ENCODE measurements at regions of chr1 and their contacts with region 1.

Region 1: GRCh38 chr1:225652729-225653462 is at the start of gene ENAH:
- DNase-seq: peak; percentile 67 to 93 (median 82)
- ATAC-seq: peak; percentile 88
- H3K4me3 ChIP-seq: peak within 1 kb of the TSS; percentile 26
- H3K27ac ChIP-seq: no peak within 1 kb of the TSS
- H3K4me1 ChIP-seq: peaks cover 0 to 16% of the 10 kb centered on the region in 2 experiments; a peak in 2 of 5 replicates
- H3K27me3 ChIP-seq: peaks cover 33 to 35% of the 10 kb centered on the region in 2 experiments
- CTCF ChIP-seq: no peak
- EP300 ChIP-seq: no peak
- POLR2A ChIP-seq: no peak
- RAD21 ChIP-seq: no peak
- polyA plus RNA-seq, gene ENAH: 0.03 to 0.13 TPM

Region 2: DNA sequence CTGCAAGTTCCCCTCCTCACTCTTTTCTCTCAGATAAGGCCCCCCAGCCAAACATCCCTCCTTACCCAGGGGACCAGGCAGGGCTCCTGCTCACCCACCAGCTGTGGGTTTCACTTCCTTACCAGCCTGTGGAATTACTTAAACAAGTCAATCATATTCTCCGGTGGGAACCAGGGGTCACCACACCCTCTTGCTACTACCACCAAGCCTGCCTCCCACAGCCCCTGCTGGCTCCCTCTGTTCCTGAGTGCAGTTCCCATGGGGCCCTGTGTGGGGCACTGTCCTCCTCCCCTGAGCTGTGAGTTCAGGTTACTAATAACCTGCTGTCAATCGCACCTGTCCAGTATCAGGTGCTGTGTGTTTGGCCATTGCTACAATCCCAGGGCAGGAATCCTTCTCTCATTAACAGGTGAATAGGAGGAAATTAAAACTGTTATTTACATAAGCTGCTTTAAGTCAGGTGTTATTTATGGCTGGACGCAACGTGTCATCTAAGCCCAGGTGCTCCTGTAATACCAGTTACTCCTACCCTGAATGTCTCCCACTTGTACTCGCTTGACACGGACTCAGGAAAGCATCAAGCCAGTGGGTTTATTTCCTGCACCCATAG is 172.0 kb before region 1 on chr1:
- CTCF ChIA-PET with region 1: no interaction called
- POLR2A ChIA-PET with region 1: no interaction called
- in situ Hi-C with region 1: no loop called
- intact Hi-C with region 1: loop called (anchors 2 kb)
- DNase-seq: peak; percentile 74 to 81 (median 80)
- ATAC-seq: peak; percentile 93
- H3K4me3 ChIP-seq: no peak overlapping the region
- H3K27ac ChIP-seq: no peak overlapping the region
- H3K4me1 ChIP-seq: no peaks in the 10 kb centered on the region; a peak in 2 of 5 replicates
- H3K27me3 ChIP-seq: peaks cover 58 to 86% of the 10 kb centered on the region in 2 experiments
- CTCF ChIP-seq: peak; percentile 91 to 99 (median 97)
- EP300 ChIP-seq: no peak
- POLR2A ChIP-seq: no peak
- RAD21 ChIP-seq: peak; percentile 34 to 77

Region 3: DNA sequence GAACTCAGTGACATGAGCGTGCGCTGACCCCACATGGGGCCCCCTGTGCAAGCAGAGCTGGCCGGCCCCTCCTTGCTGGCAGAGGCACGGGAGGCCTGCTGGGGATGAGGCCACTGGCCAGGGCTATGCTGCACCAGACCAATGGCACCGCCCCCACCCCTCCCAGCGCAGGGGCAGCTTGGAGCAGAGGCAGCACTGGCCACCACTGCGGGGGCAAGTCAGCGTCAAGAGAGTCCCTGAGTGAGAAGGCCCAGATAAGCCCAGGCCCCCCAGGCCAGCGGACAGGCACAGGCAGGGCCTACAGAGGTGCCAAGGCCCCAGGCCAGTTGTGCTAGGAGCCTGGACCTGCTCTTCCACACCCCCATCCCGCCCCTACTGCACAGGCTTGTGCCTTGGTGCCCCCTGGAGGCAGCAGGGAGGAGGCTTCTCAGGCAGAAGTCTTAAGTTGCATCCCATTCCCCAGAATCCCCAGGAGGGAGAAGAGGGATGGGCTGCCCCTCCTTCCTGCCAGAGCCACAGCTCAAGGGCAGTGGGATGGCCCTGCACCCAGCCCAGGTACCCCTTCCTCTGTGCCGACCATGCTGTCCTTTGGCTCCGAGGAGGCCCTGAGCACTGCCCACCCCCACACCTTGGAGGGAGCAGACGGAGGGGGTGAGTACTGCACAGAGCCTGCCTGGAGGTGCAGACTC is 192.8 kb after region 1 on chr1:
- CTCF ChIA-PET with region 1: interaction called, 3 read pairs
- POLR2A ChIA-PET with region 1: no interaction called
- in situ Hi-C with region 1: no loop called
- intact Hi-C with region 1: loop called (anchors 10 kb)
- DNase-seq: peak; percentile 78 to 87 (median 82)
- ATAC-seq: peak; percentile 90
- H3K4me3 ChIP-seq: no peak overlapping the region
- H3K27ac ChIP-seq: no peak overlapping the region
- H3K4me1 ChIP-seq: peaks cover 9 to 42% of the 10 kb centered on the region in 2 experiments; a peak in 4 of 5 replicates
- H3K27me3 ChIP-seq: no peaks in the 10 kb centered on the region
- CTCF ChIP-seq: peak; percentile 85 to 91 (median 90)
- EP300 ChIP-seq: no peak
- POLR2A ChIP-seq: no peak; the same call in 1 of the 2 replicates
- RAD21 ChIP-seq: peak; percentile 82 to 87

Measured in K562 (cell line).